ENCODE measurements at regions of chr1 and their contacts with region 1.

Region 1: GRCh38 chr1:2575801-2576663 is 10.5 kb upstream of the PRXL2B start:
- DNase-seq: peak in 1 of 5 donors; percentile 28
- H3K4me3 ChIP-seq: no peak overlapping the region
- H3K4me3 Mint-ChIP-seq: peak overlapping the region in 3 of 8 donors; percentile 16 to 59 (median 30)
- H3K27ac ChIP-seq: peak overlapping the region; percentile 99
- H3K27ac Mint-ChIP-seq: peak overlapping the region in 6 of 7 donors; percentile 13 to 98 (median 70)
- H3K4me1 ChIP-seq: peaks cover 47% of the 10 kb centered on the region
- H3K4me1 Mint-ChIP-seq: peaks cover 16 to 59% (median 32%) of the 10 kb centered on the region in 4 donors
- H3K27me3 ChIP-seq: no peaks in the 10 kb centered on the region
- H3K27me3 Mint-ChIP-seq: no peaks in the 10 kb centered on the region

Region 2: DNA sequence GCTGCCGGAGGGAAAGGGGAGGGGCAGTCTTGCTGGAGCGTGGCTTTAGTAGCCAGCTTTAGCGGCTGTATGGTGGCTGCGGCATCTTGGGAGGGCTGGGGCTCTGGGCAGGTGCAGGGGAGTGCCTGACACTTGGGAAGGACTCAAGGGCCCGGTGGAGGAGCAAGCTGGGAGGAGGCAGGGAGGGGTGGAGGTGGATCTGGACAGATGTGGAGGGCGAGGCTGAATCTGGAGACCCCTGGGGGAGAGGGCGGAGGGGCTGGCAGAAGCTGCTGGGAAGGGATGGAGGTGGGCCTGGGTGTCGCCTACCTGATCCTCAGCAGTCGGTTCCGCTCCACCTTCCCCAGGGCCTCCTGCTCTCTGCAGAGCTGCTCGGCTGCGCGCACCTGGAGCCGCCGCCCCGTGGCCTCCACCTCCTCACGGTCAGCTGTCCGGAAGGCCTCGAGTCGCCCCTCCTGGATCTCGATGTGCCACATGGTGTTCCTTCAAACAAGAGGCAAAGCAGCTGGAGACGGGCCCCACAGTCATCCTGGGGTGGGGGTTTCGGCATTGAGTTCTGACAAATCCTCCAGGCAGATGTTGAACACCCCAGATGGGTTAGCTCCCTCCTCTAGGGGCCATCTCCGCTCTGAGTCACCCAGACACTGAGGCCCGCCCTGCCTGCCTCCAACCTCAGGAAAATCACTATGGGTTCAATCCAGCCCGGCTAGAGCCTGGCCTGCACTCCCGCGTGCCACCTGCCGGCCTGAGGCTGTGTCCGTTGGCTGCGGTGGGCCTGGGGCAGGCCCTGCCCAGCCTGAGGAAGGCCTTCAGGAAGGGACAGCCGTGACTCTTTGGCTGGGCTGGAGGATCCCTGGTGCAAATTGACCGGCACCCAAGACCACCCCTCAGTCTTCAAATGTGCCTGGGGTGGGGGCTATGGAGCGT is 602.1 kb before region 1 on chr1:
- CTCF ChIA-PET with region 1: no interaction called
- POLR2A ChIA-PET with region 1: no interaction called
- intact Hi-C with region 1: no loop called
- DNase-seq: no peak
- H3K4me3 ChIP-seq: no peak overlapping the region
- H3K4me3 Mint-ChIP-seq: no peak overlapping the region
- H3K27ac ChIP-seq: no peak overlapping the region
- H3K27ac Mint-ChIP-seq: no peak overlapping the region
- H3K4me1 ChIP-seq: no peaks in the 10 kb centered on the region
- H3K4me1 Mint-ChIP-seq: no peaks in the 10 kb centered on the region
- H3K27me3 ChIP-seq: no peaks in the 10 kb centered on the region
- H3K27me3 Mint-ChIP-seq: peaks cover 4 to 5% of the 10 kb centered on the region in 2 donors

Region 3: GRCh38 chr1:2556277-2556677 is 19.8 kb before region 1 on chr1 and contains the start of gene TNFRSF14:
- CTCF ChIA-PET with region 1: interaction called, 16 read pairs
- POLR2A ChIA-PET with region 1: interaction called, 145 read pairs
- intact Hi-C with region 1: loop called (anchors 2 kb)
- DNase-seq: peak; percentile 77 to 88 (median 78)
- H3K4me3 ChIP-seq: peak within 1 kb of the TSS; percentile 95 to 98
- H3K4me3 Mint-ChIP-seq: peak within 1 kb of the TSS; percentile 92 to 99 (median 96)
- H3K27ac ChIP-seq: peak within 1 kb of the TSS; percentile 98
- H3K27ac Mint-ChIP-seq: peak within 1 kb of the TSS; percentile 95 to 100 (median 98)
- H3K4me1 ChIP-seq: peaks cover 43% of the 10 kb centered on the region
- H3K4me1 Mint-ChIP-seq: peaks cover 9 to 50% (median 30%) of the 10 kb centered on the region in 4 donors
- H3K27me3 ChIP-seq: no peaks in the 10 kb centered on the region
- H3K27me3 Mint-ChIP-seq: no peaks in the 10 kb centered on the region
- total RNA-seq, gene TNFRSF14: 170 to 173 TPM

Region 4: GRCh38 chr1:2561898-2562545 is 14.0 kb before region 1 on chr1:
- CTCF ChIA-PET with region 1: interaction called, 16 read pairs
- POLR2A ChIA-PET with region 1: interaction called, 145 read pairs
- intact Hi-C with region 1: loop called (anchors 2 kb)
- DNase-seq: no peak
- H3K4me3 ChIP-seq: no peak overlapping the region
- H3K4me3 Mint-ChIP-seq: no peak overlapping the region
- H3K27ac ChIP-seq: peak overlapping the region; percentile 15
- H3K27ac Mint-ChIP-seq: peak overlapping the region in 2 of 7 donors; percentile 35 to 40
- H3K4me1 ChIP-seq: peaks cover 23% of the 10 kb centered on the region
- H3K4me1 Mint-ChIP-seq: peaks cover 0 to 23% (median 10%) of the 10 kb centered on the region in 4 donors
- H3K27me3 ChIP-seq: no peaks in the 10 kb centered on the region
- H3K27me3 Mint-ChIP-seq: no peaks in the 10 kb centered on the region

Region 5: DNA sequence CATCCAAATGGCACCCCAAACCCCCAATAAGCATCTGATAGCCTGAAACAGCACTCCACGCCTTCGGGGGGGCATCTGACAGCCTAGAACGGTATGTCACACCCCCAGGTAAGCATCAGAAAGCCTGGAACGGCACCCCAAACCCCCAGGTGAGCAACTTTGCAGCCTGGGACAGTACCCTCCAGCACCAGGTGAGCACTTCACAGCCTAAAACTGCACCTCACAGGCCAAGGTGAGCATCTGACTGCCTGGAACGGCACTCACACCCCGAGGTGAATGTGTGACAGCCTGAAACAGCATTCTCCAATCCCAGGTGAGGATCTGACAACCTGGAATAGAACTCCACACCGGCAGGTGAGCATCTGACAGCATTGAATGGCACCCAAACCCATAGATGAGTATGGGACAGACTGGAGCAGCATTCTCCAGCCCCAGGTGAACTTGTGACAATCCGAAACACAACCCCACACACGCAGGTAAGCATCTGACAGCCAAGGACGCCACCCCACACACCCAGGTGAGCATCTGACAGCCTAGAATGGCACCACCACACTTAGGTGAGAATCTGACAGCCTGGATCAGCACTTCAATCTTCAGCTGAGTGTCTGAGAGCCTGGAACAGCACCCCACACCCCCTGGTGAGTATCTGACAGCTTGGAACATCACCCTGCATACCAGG is 75.1 kb after region 1 on chr1:
- CTCF ChIA-PET with region 1: no interaction called
- POLR2A ChIA-PET with region 1: no interaction called
- intact Hi-C with region 1: no loop called
- DNase-seq: no peak
- H3K4me3 ChIP-seq: no peak overlapping the region
- H3K4me3 Mint-ChIP-seq: no peak overlapping the region
- H3K27ac ChIP-seq: no peak overlapping the region
- H3K27ac Mint-ChIP-seq: peak overlapping the region in 1 of 7 donors; percentile 35
- H3K4me1 ChIP-seq: no peaks in the 10 kb centered on the region
- H3K4me1 Mint-ChIP-seq: peaks cover 0 to 1% (median 0%) of the 10 kb centered on the region in 4 donors
- H3K27me3 ChIP-seq: peaks cover 30% of the 10 kb centered on the region
- H3K27me3 Mint-ChIP-seq: peaks cover 39 to 41% of the 10 kb centered on the region in 2 donors